ENCODE measurements at regions of chr12 and their contacts with region 1.

Region 1: GRCh38 chr12:546921-547845 is 87.4 kb downstream of the B4GALNT3 start:
- DNase-seq: peak; percentile 64
- H3K4me3 Mint-ChIP-seq: no peak overlapping the region
- H3K27ac Mint-ChIP-seq: peak overlapping the region; percentile 54
- H3K4me1 Mint-ChIP-seq: peaks cover 37% of the 10 kb centered on the region
- H3K27me3 Mint-ChIP-seq: peaks cover 13% of the 10 kb centered on the region

Region 2: DNA sequence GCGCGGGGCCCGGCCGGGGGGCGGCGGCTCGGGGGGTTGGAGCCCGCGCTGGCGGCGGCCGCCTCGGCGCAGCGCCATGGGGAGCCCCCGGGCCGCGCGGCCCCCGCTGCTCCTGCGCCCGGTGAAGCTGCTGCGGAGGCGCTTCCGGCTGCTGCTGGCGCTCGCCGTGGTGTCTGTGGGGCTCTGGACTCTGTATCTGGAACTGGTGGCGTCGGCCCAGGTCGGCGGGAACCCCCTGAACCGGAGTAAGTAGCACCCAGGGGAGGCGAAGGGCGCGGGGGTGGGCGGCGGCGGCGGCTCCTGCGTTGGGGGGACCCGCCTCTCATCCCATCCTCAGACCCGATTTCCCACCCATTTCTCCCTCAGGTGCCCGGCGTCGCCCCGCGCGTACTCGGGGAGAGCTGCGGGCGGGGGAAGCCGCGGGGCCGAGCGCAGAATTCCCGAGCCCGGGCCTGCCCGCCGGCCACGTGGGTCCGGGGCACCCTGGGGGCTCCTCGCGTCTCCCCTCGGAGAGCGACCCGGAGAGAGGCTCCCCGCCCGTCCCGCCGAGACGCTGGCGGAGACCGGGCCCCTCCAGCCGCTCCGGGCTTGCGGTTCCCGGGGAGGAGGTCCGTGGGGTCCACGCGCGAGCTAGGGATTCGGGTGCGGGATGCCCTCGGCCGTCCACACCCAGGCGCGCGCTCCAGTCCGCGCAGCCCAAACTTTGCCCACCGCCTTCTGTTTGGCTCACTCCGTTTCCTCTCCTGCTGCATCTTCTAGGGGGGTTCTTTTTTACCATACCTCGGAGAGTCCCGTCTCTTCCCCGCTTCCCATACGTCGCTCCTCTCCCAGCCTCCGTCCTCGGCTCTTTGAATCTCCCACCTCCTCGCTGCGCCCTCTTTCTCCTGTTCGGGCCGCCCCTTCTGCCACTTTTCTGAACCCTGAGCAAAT is 86.6 kb before region 1 on chr12:
- CTCF ChIA-PET with region 1: interaction called, 137 read pairs
- POLR2A ChIA-PET with region 1: no interaction called
- DNase-seq: peak; percentile 38
- H3K4me3 Mint-ChIP-seq: peak overlapping the region; percentile 74
- H3K27ac Mint-ChIP-seq: no peak overlapping the region
- H3K4me1 Mint-ChIP-seq: peaks cover 12% of the 10 kb centered on the region
- H3K27me3 Mint-ChIP-seq: peaks cover 76% of the 10 kb centered on the region

Region 3: GRCh38 chr12:674272-674781 is 127.1 kb after region 1 on chr12:
- CTCF ChIA-PET with region 1: no interaction called
- POLR2A ChIA-PET with region 1: no interaction called
- DNase-seq: peak; percentile 82
- H3K4me3 Mint-ChIP-seq: peak overlapping the region; percentile 56
- H3K27ac Mint-ChIP-seq: peak overlapping the region; percentile 96
- H3K4me1 Mint-ChIP-seq: peaks cover 67% of the 10 kb centered on the region
- H3K27me3 Mint-ChIP-seq: no peaks in the 10 kb centered on the region

Measured in activated CD4-positive, alpha-beta T cell treated with anti-CD3 and anti-CD28 coated beads, Interleukin-2, amount 10 ng/mL, durations not matched to agents 7 days and 5 days (primary cell).